Calu3 (cell line): ENCODE measurements at regions of chr3 and their contacts with region 1.

Region 1: GRCh38 chr3:69881051-69881450 is 118.5 kb upstream of the SAMMSON start:
- DNase-seq: no peak
- H3K4me3 Mint-ChIP-seq: no peak overlapping the region
- H3K27ac Mint-ChIP-seq: no peak overlapping the region
- H3K4me1 Mint-ChIP-seq: peaks cover 40% of the 10 kb centered on the region
- H3K27me3 Mint-ChIP-seq: no peaks in the 10 kb centered on the region
- CTCF ChIP-seq: no peak

Region 2: GRCh38 chr3:69784954-69785514 is 96.0 kb before region 1 on chr3:
- CTCF ChIA-PET with region 1: no interaction called
- intact Hi-C with region 1: no loop called
- DNase-seq: peak; percentile 50
- H3K4me3 Mint-ChIP-seq: no peak overlapping the region
- H3K27ac Mint-ChIP-seq: no peak overlapping the region
- H3K4me1 Mint-ChIP-seq: peaks cover 26% of the 10 kb centered on the region
- H3K27me3 Mint-ChIP-seq: no peaks in the 10 kb centered on the region
- CTCF ChIP-seq: no peak

Region 3: GRCh38 chr3:69865920-69866679 is 15.0 kb before region 1 on chr3:
- CTCF ChIA-PET with region 1: interaction called, 6 read pairs
- intact Hi-C with region 1: loop called (anchors 2 kb)
- DNase-seq: peak; percentile 69
- H3K4me3 Mint-ChIP-seq: peak overlapping the region; percentile 82
- H3K27ac Mint-ChIP-seq: peak overlapping the region; percentile 95
- H3K4me1 Mint-ChIP-seq: peaks cover 44% of the 10 kb centered on the region
- H3K27me3 Mint-ChIP-seq: no peaks in the 10 kb centered on the region
- CTCF ChIP-seq: no peak

Region 4: GRCh38 chr3:69906351-69906966 is 25.4 kb after region 1 on chr3:
- CTCF ChIA-PET with region 1: interaction called, 3 read pairs
- intact Hi-C with region 1: loop called (anchors 2 kb)
- DNase-seq: no peak
- H3K4me3 Mint-ChIP-seq: no peak overlapping the region
- H3K27ac Mint-ChIP-seq: peak overlapping the region; percentile 66
- H3K4me1 Mint-ChIP-seq: peaks cover 49% of the 10 kb centered on the region
- H3K27me3 Mint-ChIP-seq: no peaks in the 10 kb centered on the region
- CTCF ChIP-seq: no peak

Region 5: GRCh38 chr3:69930564-69930963 is 49.5 kb after region 1 on chr3:
- CTCF ChIA-PET with region 1: no interaction called
- intact Hi-C with region 1: no loop called
- DNase-seq: no peak
- H3K4me3 Mint-ChIP-seq: no peak overlapping the region
- H3K27ac Mint-ChIP-seq: no peak overlapping the region
- H3K4me1 Mint-ChIP-seq: peaks cover 7% of the 10 kb centered on the region
- H3K27me3 Mint-ChIP-seq: no peaks in the 10 kb centered on the region
- CTCF ChIP-seq: no peak